ENCODE measurements at regions of chr6 and their contacts with region 1.

Region 1: GRCh38 chr6:18155150-18155863 is at the start of gene KDM1B:
- DNase-seq: peak; percentile 98
- H3K4me3 Mint-ChIP-seq: peak within 1 kb of the TSS; percentile 96
- H3K27ac Mint-ChIP-seq: peak within 1 kb of the TSS; percentile 90
- H3K4me1 Mint-ChIP-seq: peaks cover 25% of the 10 kb centered on the region
- H3K27me3 Mint-ChIP-seq: no peaks in the 10 kb centered on the region
- total RNA-seq, gene KDM1B: 9.7 and 9.9 TPM in 2 replicates

Region 2: GRCh38 chr6:17706580-17707370 is 448.5 kb before region 1 on chr6 and contains the start of gene NUP153:
- intact Hi-C with region 1: loop called (anchors 2 kb)
- DNase-seq: peak; percentile 100
- H3K4me3 Mint-ChIP-seq: peak within 1 kb of the TSS; percentile 94
- H3K27ac Mint-ChIP-seq: peak within 1 kb of the TSS; percentile 98
- H3K4me1 Mint-ChIP-seq: peaks cover 27% of the 10 kb centered on the region
- H3K27me3 Mint-ChIP-seq: no peaks in the 10 kb centered on the region
- total RNA-seq, gene NUP153: 90.2 and 93.5 TPM in 2 replicates

Region 3: GRCh38 chr6:18047406-18047805 is 107.9 kb before region 1 on chr6:
- intact Hi-C with region 1: no loop called
- DNase-seq: no peak
- H3K4me3 Mint-ChIP-seq: no peak overlapping the region
- H3K27ac Mint-ChIP-seq: no peak overlapping the region
- H3K4me1 Mint-ChIP-seq: peaks cover 3% of the 10 kb centered on the region
- H3K27me3 Mint-ChIP-seq: peaks cover 3% of the 10 kb centered on the region

Region 4: DNA sequence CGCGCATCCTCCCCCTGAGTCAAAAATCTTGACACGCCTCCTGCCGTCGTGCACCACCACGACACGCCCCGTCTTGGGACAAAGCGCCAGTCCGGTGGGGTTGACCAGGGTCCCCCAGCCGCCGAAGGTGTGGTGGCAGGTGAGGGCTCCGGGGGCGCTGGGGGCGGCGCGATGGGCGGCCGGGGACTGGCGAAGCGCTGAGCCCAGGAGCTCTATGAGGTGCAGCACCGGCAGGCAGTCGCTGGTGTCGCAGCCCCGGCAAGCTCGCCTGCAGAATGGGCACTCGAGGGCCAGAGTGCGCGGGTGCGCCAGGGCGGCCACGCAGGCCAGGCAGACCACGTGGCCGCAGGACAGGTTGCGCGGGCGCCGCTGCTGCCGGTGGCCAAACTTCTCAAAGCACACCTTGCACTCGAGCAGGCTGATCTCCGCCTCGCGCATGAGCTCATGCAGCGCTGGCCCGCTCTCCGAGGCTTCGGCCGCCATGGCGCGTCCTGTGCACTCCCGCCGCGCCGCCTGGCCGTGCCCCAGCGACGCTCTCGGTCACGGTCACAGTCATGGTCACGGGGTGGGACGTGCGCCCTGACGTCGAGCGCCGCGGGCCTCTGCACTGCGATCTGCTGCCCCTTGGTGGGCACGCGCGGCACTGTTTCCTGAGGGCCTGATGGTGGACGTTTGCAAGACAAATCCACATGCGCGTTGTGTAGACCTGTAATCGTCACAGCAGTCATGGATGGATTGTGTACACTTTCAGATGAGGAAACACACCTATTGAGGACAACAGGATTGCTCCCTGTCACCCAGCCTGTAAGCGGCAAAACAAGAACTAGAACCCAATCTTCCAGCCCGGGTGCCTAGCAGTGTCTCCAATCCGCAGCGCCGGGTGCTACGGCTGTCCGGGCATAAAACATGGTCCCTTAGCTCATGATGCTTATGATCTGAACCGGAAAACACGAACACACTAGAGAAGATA is 32.9 kb before region 1 on chr6 and contains the start of gene NHLRC1:
- intact Hi-C with region 1: loop called (anchors 2 kb)
- DNase-seq: peak; percentile 66
- H3K4me3 Mint-ChIP-seq: peak within 1 kb of the TSS; percentile 59
- H3K27ac Mint-ChIP-seq: no peak within 1 kb of the TSS
- H3K4me1 Mint-ChIP-seq: peaks cover 13% of the 10 kb centered on the region
- H3K27me3 Mint-ChIP-seq: peaks cover 56% of the 10 kb centered on the region
- total RNA-seq, gene NHLRC1: 0.23 and 0.43 TPM in 2 replicates

Region 5: GRCh38 chr6:18242062-18242851 is 87.0 kb after region 1 on chr6:
- intact Hi-C with region 1: loop called (anchors 5 kb)
- DNase-seq: no peak
- H3K4me3 Mint-ChIP-seq: no peak overlapping the region
- H3K27ac Mint-ChIP-seq: peak overlapping the region; percentile 56
- H3K4me1 Mint-ChIP-seq: peaks cover 54% of the 10 kb centered on the region
- H3K27me3 Mint-ChIP-seq: no peaks in the 10 kb centered on the region

Region 6: DNA sequence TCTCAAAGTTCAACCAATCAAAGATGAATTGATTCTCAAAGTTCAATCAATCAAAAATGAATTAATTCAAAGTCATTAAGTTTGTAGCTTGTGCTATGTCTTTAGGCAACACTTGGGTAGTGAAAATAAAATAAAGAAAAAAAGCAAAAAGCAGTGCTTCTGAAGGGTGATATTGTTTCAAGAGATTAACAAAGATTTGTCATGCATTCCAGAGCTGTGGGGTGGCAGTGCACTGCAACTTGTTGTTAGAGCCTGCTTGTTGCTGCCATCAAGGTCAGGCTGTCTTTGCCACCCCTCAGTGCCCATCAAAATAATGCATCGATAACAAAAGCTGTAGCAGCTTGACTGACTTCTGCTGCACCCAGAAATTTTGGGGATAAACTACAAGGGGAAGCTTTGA is 360.5 kb after region 1 on chr6:
- intact Hi-C with region 1: loop called (anchors 10 kb)
- DNase-seq: no peak
- H3K4me3 Mint-ChIP-seq: no peak overlapping the region
- H3K27ac Mint-ChIP-seq: no peak overlapping the region
- H3K4me1 Mint-ChIP-seq: peaks cover 18% of the 10 kb centered on the region
- H3K27me3 Mint-ChIP-seq: peaks cover 23% of the 10 kb centered on the region

Measured in activated T-helper 2 cell treated with anti-CD3 and anti-CD28 coated beads, Interferon-gamma antibody, Interleukin-2, Interleukin-4, amounts not matched to agents 10 μg/mL and 5 μg/mL and 100 μg/mL, durations not matched to agents 14 hours and 24 hours and 36 hours (primary cell).